Aorta (tissue), 5 donors: ENCODE measurements at regions of chr11 and their contacts with region 1.

Region 1: GRCh38 chr11:119545978-119546885 is 123.3 kb upstream of the THY1 start:
- DNase-seq: peak in 1 of 2 donors; percentile 67
- ATAC-seq: no peak
- H3K4me3 ChIP-seq: no peak overlapping the region
- H3K27ac ChIP-seq: no peak overlapping the region
- H3K4me1 ChIP-seq: no peaks in the 10 kb centered on the region
- H3K27me3 ChIP-seq: no peaks in the 10 kb centered on the region

Region 2: GRCh38 chr11:119533921-119534736 is 12.1 kb before region 1 on chr11:
- intact Hi-C with region 1: loop called in 1 of 2 experiments (anchors 1 kb)
- DNase-seq: peak; percentile 81 to 92
- ATAC-seq: peak; percentile 60
- H3K4me3 ChIP-seq: no peak overlapping the region
- H3K27ac ChIP-seq: no peak overlapping the region
- H3K4me1 ChIP-seq: no peaks in the 10 kb centered on the region
- H3K27me3 ChIP-seq: no peaks in the 10 kb centered on the region

Region 3: GRCh38 chr11:119728651-119729580 is 182.7 kb after region 1 on chr11 and contains the start of gene NECTIN1:
- intact Hi-C with region 1: no loop called
- DNase-seq: peak; percentile 92 to 97
- ATAC-seq: peak; percentile 95
- H3K4me3 ChIP-seq: peak within 1 kb of the TSS; percentile 45 to 82
- H3K27ac ChIP-seq: peak within 1 kb of the TSS; percentile 29 to 49
- H3K4me1 ChIP-seq: no peaks in the 10 kb centered on the region
- H3K27me3 ChIP-seq: no peaks in the 10 kb centered on the region
- total RNA-seq, gene NECTIN1: 5.5 to 7.1 TPM